ENCODE measurements at regions of chr2 and their contacts with region 1.

Region 1: DNA sequence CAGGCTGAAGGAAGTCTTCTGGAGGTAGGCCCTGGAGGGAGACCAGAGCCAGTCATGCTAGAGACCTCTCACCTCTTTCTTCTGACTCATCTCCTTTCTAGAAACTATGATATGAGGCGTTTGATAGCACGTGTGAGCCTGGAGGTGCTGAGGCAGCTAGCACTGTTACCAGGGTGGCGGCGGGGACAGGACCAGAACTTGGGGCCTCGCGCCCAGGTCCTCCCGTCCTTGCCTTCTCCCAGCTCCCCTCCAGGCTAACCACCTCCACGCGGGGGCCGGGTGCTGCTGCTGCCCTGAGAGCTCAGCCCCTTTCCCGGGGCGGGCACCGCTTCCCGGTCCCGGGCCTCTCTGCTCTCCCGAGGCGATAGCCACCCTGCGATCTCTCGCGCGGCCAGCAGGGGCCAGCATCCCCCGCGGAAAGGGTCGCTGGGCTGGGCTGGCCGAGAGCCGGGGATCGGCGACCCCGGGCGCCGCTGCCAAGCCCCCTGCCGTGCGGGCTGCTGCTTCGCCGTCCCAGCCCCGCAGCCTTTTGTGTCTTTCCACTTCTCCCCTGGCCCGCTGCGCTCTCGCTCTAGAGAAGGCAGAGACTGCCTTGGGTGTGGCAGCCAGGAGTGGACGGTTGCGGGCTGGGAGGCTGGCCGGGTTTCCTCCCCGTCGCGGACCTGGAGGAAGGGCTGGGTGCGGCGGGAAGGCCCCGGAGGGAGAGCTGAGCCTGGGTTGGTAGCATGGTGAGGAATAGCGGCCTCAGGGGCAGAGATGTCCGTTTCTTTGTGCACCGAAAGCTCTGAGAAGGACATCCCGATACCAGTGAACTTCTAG is 49.1 kb downstream of the TMEM17 start:
- DNase-seq: no peak
- H3K4me3 ChIP-seq: peak overlapping the region; percentile 55
- H3K27me3 ChIP-seq: no peaks in the 10 kb centered on the region
- CTCF ChIP-seq: peak; percentile 77

Region 2: GRCh38 chr2:62398356-62398755 is 58.6 kb before region 1 on chr2:
- CTCF ChIA-PET with region 1: no interaction called
- POLR2A ChIA-PET with region 1: no interaction called
- DNase-seq: no peak
- H3K4me3 ChIP-seq: no peak overlapping the region
- H3K27me3 ChIP-seq: no peaks in the 10 kb centered on the region
- CTCF ChIP-seq: no peak

Region 3: GRCh38 chr2:62505750-62506420 is 49.0 kb after region 1 on chr2 and contains the start of gene TMEM17:
- CTCF ChIA-PET with region 1: interaction called, 11 read pairs
- POLR2A ChIA-PET with region 1: no interaction called
- DNase-seq: peak; percentile 63
- H3K4me3 ChIP-seq: peak within 1 kb of the TSS; percentile 63
- H3K27me3 ChIP-seq: no peaks in the 10 kb centered on the region
- CTCF ChIP-seq: no peak
- polyA plus RNA-seq, gene TMEM17: 2.8 and 4.8 TPM in 2 replicates

Region 4: GRCh38 chr2:62577994-62578781 is 121.3 kb after region 1 on chr2:
- CTCF ChIA-PET with region 1: interaction called, 16 read pairs
- POLR2A ChIA-PET with region 1: no interaction called
- DNase-seq: peak; percentile 94
- H3K4me3 ChIP-seq: no peak overlapping the region
- H3K27me3 ChIP-seq: no peaks in the 10 kb centered on the region
- CTCF ChIP-seq: no peak

Region 5: DNA sequence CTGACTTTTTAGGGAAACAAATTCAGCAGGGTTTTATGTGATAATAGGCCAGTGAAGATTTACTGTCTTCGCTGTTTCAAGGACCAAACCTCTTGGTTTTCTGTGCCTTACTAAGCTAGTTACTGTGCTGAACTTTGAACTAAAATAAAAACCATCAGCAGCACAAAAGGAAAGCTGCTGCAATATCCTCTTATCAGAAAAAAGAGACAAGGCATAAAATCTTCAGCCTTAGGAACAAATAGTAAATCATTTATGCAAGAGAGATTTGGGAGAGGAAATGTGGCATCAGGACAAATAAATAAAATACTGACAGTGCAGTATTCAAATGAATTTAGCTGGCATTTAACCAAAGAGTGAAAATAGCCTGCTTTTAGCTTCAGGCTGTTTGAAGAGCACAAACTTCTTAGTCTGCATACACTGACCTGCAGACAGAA is 184.5 kb after region 1 on chr2:
- CTCF ChIA-PET with region 1: interaction called, 13 read pairs
- POLR2A ChIA-PET with region 1: no interaction called
- DNase-seq: no peak
- H3K4me3 ChIP-seq: no peak overlapping the region
- H3K27me3 ChIP-seq: no peaks in the 10 kb centered on the region
- CTCF ChIP-seq: no peak

Region 6: GRCh38 chr2:62774555-62775366 is 317.8 kb after region 1 on chr2:
- CTCF ChIA-PET with region 1: interaction called, 72 read pairs
- POLR2A ChIA-PET with region 1: no interaction called
- DNase-seq: no peak
- H3K4me3 ChIP-seq: no peak overlapping the region
- H3K27me3 ChIP-seq: no peaks in the 10 kb centered on the region
- CTCF ChIP-seq: peak; percentile 58

Region 7: GRCh38 chr2:62826141-62826540 is 369.2 kb after region 1 on chr2:
- CTCF ChIA-PET with region 1: no interaction called
- POLR2A ChIA-PET with region 1: no interaction called
- DNase-seq: peak; percentile 13
- H3K4me3 ChIP-seq: no peak overlapping the region
- H3K27me3 ChIP-seq: no peaks in the 10 kb centered on the region
- CTCF ChIP-seq: no peak

Measured in BJ (cell line).